ENCODE measurements at regions of chr20 and their contacts with region 1.

Region 1: GRCh38 chr20:53708129-53708968 is 114.7 kb upstream of the ZNF217 start:
- DNase-seq: peak; percentile 62
- H3K4me3 Mint-ChIP-seq: peak overlapping the region; percentile 63
- H3K27ac Mint-ChIP-seq: peak overlapping the region; percentile 94
- H3K4me1 Mint-ChIP-seq: peaks cover 39% of the 10 kb centered on the region
- H3K27me3 Mint-ChIP-seq: no peaks in the 10 kb centered on the region

Region 2: DNA sequence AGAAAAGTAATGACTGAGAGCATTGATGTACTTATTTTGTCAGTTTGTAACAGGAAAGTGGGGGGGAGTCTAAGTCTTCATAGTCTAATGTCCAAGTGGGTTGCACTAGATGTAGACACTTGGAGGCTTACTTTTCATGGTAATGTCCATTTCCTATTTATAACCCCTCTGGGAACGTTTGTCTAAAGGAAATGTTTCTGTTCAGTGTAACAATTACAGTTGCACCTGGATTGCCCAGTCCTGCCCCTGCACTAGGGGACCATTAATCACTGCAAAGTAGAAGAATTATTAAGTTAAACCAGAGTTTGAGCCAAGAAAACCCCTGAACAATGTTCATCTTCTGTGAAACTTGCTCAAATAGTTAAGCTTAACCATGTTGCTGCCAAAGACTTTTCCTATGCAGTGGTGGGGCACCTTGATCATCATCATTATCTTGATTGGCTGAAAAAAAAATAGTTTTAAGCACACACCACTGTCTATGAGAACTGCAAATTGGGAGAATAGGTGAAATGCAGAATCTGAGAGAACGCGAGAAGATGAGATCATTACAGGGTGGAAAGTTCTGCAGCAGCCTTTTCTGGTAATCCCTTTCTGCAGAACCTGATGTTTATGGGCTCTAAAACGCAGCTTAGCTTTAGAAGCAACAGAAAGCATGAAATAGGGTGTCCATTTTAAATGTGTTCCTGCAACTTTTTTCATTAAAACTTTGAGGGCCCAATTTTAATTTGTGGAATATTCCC is 220.7 kb before region 1 on chr20:
- CTCF ChIA-PET with region 1: no interaction called
- POLR2A ChIA-PET with region 1: no interaction called
- intact Hi-C with region 1: no loop called
- DNase-seq: no peak
- H3K4me3 Mint-ChIP-seq: no peak overlapping the region
- H3K27ac Mint-ChIP-seq: no peak overlapping the region
- H3K4me1 Mint-ChIP-seq: peaks cover 23% of the 10 kb centered on the region
- H3K27me3 Mint-ChIP-seq: no peaks in the 10 kb centered on the region

Region 3: GRCh38 chr20:53623454-53624211 is 84.7 kb before region 1 on chr20:
- CTCF ChIA-PET with region 1: no interaction called
- POLR2A ChIA-PET with region 1: no interaction called
- intact Hi-C with region 1: no loop called
- DNase-seq: peak; percentile 59
- H3K4me3 Mint-ChIP-seq: peak overlapping the region; percentile 73
- H3K27ac Mint-ChIP-seq: peak overlapping the region; percentile 88
- H3K4me1 Mint-ChIP-seq: peaks cover 35% of the 10 kb centered on the region
- H3K27me3 Mint-ChIP-seq: no peaks in the 10 kb centered on the region

Region 4: DNA sequence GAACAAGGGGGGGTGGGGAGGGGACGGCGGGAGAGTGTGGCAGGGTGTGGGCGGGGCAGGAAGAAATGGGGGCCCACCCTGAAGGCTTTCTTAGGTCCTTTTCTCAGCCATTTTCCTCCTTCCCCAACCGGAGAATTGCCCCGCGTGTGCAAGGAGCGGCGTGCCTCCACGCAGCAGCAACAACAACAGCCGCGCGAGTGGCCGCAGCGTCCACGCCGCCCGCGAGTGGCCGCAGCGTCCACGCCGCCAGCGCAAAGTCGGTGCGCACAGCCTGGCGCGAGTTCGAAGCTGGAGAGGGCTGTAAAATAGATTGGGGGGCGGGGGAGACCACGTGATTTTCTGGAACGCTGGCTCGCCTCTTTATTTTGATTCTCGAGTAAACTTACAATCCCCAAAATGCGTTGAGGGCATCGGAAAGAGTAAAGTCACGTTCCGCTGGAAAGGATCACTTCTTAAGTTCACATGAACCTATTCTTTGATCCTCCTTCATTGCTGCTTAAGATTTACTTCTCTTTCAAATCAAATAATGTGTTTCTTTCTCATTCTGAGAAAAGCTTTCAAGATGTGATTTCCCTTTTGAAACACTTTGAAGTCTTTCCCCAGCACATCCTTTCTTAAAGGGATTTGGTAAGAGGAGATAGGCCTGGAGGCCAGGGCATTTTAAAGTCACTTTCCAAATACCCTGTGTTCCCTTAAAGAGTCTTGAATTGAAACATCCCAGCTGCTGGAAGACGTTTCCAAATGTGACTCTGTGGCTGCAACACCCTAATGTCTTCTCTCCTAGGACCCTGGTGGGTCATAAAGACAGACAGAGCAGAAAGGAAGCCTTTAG is 48.1 kb before region 1 on chr20:
- CTCF ChIA-PET with region 1: interaction called, 4 read pairs
- POLR2A ChIA-PET with region 1: no interaction called
- intact Hi-C with region 1: loop called (anchors 1 kb)
- DNase-seq: peak; percentile 58
- H3K4me3 Mint-ChIP-seq: peak overlapping the region; percentile 78
- H3K27ac Mint-ChIP-seq: peak overlapping the region; percentile 83
- H3K4me1 Mint-ChIP-seq: peaks cover 55% of the 10 kb centered on the region
- H3K27me3 Mint-ChIP-seq: no peaks in the 10 kb centered on the region

Region 5: DNA sequence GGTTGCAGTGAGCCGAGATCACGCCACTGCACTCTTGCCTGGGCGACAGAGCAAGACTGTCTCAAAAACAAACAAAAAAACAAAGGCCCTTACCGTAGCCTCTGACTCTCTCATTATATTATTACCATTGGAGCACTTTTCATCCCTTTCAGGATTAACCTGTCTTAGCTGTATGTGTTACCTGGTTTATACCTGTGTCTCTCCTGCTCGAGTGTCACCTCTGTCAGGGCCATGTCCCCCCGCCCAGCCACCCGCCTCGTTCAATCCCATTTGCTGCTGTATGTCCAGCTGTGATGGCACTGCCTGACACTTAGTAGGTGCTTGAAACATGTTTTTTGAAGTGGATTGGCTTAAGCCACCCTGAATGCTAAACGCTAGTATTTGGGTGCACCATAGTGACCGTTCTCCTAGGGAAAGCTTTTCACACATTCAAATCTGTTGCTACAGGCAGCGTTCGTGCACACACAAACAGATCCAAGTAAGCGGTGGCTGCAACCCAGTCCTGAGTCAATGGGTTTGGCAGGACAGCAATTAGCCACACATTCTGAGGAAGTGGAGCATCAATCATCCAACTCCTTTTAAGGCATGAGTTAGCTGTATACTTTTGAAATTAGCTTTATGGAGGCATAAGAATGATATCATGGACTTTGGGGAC is 15.8 kb before region 1 on chr20:
- CTCF ChIA-PET with region 1: interaction called, 4 read pairs
- POLR2A ChIA-PET with region 1: no interaction called
- intact Hi-C with region 1: loop called (anchors 1 kb)
- DNase-seq: peak; percentile 33
- H3K4me3 Mint-ChIP-seq: no peak overlapping the region
- H3K27ac Mint-ChIP-seq: peak overlapping the region; percentile 1
- H3K4me1 Mint-ChIP-seq: peaks cover 22% of the 10 kb centered on the region
- H3K27me3 Mint-ChIP-seq: no peaks in the 10 kb centered on the region

Region 6: DNA sequence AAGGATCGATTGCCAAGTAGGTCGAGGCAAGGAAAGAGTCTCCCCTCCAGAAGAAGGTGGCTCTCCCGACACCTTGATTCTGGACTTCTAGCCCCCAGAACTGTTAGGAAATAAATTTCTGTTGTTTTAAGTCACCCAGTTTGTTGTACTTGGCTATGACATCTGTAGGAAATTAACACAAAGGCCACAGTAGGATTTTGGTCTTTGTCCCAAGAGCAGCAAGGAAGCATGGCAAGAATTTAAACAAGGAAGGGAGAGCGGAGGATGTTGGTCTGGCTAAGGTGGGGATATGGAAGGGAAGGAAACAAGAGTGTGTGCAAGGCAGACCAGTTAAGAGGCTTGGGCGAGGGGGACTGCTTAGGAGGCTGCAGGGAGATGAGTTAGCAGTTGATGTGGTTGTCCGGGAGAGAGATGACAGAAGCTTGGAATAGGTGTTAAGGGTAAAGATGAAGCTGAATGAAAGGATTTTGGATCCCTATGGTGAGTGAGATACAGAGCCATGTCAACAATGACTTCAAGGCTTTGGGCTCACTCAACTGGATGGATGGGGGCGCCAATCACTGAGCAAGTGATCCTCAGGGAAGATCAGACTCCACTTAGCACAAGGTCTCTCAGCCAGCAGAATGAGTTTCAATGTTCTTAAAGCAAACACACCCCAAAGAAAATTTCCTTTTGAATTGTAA is 25.8 kb after region 1 on chr20:
- CTCF ChIA-PET with region 1: interaction called, 4 read pairs
- POLR2A ChIA-PET with region 1: interaction called, 6 read pairs
- intact Hi-C with region 1: loop called (anchors 2 kb)
- DNase-seq: no peak
- H3K4me3 Mint-ChIP-seq: no peak overlapping the region
- H3K27ac Mint-ChIP-seq: no peak overlapping the region
- H3K4me1 Mint-ChIP-seq: peaks cover 24% of the 10 kb centered on the region
- H3K27me3 Mint-ChIP-seq: no peaks in the 10 kb centered on the region

Region 7: GRCh38 chr20:53750827-53751619 is 42.7 kb after region 1 on chr20:
- CTCF ChIA-PET with region 1: no interaction called
- POLR2A ChIA-PET with region 1: interaction called, 5 read pairs
- intact Hi-C with region 1: loop called (anchors 2 kb)
- DNase-seq: peak; percentile 53
- H3K4me3 Mint-ChIP-seq: peak overlapping the region; percentile 45
- H3K27ac Mint-ChIP-seq: peak overlapping the region; percentile 95
- H3K4me1 Mint-ChIP-seq: peaks cover 60% of the 10 kb centered on the region
- H3K27me3 Mint-ChIP-seq: no peaks in the 10 kb centered on the region

Region 8: GRCh38 chr20:53869466-53870258 is 161.3 kb after region 1 on chr20:
- CTCF ChIA-PET with region 1: interaction called, 3 read pairs
- POLR2A ChIA-PET with region 1: interaction called, 4 read pairs
- intact Hi-C with region 1: loop called (anchors 1 kb)
- DNase-seq: peak; percentile 87
- H3K4me3 Mint-ChIP-seq: peak overlapping the region; percentile 52
- H3K27ac Mint-ChIP-seq: peak overlapping the region; percentile 77
- H3K4me1 Mint-ChIP-seq: peaks cover 68% of the 10 kb centered on the region
- H3K27me3 Mint-ChIP-seq: no peaks in the 10 kb centered on the region

Region 9: GRCh38 chr20:53915446-53916172 is 207.3 kb after region 1 on chr20:
- CTCF ChIA-PET with region 1: interaction called, 9 read pairs
- POLR2A ChIA-PET with region 1: interaction called, 9 read pairs
- intact Hi-C with region 1: loop called (anchors 1 kb)
- DNase-seq: peak; percentile 98
- H3K4me3 Mint-ChIP-seq: peak overlapping the region; percentile 91
- H3K27ac Mint-ChIP-seq: peak overlapping the region; percentile 82
- H3K4me1 Mint-ChIP-seq: peaks cover 40% of the 10 kb centered on the region
- H3K27me3 Mint-ChIP-seq: no peaks in the 10 kb centered on the region

Region 10: DNA sequence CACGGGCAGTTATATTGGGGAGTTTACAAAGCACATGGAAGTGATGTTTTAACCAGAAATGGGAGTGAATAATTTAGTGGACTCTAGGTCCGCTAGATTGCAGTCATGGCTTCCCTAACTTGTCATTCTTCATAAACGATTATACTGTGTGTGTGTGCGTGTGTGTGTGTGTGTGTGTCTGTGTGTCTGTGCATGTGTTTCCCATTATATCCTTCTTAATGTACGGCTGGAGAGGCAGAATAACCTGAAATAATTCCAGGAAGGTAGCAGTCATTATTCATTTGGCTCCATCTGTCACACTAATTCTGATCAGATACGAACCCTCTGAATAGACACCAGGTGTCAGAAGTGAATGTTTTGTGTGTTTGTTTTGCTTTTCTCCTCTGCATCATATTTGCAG is 1139.9 kb after region 1 on chr20:
- CTCF ChIA-PET with region 1: no interaction called
- POLR2A ChIA-PET with region 1: no interaction called
- intact Hi-C with region 1: no loop called
- DNase-seq: no peak
- H3K4me3 Mint-ChIP-seq: no peak overlapping the region
- H3K27ac Mint-ChIP-seq: no peak overlapping the region
- H3K4me1 Mint-ChIP-seq: no peaks in the 10 kb centered on the region
- H3K27me3 Mint-ChIP-seq: no peaks in the 10 kb centered on the region

Measured in activated CD4-positive, alpha-beta memory T cell treated with anti-CD3 and anti-CD28 coated beads for 36 hours (primary cell).